Psoas muscle (tissue), 8 donors: ENCODE measurements at regions of chr10 and their contacts with region 1.

Region 1: DNA sequence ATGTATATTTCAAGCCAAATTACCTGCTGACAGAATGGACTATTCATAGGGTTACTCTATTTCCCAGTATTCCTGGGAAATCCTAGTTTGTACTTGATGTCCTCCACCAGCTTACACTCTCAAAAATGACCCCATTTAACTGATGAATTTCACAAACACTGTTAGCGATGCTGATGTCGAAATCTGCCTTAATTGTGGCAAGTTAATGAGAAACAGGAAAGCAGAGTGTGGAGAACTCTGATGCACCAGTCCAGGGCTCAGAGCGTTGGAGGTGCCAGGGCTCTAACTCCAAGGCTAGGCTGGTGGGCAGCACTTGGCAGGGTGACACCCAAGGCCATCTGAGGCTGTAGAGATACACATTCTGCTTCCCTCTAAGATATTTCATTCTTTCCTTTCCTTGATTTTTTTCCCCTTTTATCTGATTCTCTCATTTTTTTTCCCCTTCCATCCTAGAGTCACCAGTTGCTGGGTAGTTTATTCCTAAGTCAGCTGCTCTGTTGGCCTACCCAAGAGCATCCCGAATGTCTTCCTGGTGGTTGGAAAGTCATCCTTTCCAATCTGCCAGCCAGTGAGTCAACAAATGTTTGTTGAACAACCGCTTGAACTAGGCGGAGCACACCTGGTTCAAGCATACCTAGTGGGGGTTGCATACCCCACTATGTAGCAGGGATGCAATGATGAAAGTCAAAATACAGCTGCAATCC is 525.0 kb upstream of the NRP1 start:
- DNase-seq: no peak
- ATAC-seq: no peak
- H3K4me3 ChIP-seq: no peak overlapping the region
- H3K27ac ChIP-seq: no peak overlapping the region
- H3K4me1 ChIP-seq: no peaks in the 10 kb centered on the region
- H3K27me3 ChIP-seq: no peaks in the 10 kb centered on the region
- CTCF ChIP-seq: no peak

Region 2: DNA sequence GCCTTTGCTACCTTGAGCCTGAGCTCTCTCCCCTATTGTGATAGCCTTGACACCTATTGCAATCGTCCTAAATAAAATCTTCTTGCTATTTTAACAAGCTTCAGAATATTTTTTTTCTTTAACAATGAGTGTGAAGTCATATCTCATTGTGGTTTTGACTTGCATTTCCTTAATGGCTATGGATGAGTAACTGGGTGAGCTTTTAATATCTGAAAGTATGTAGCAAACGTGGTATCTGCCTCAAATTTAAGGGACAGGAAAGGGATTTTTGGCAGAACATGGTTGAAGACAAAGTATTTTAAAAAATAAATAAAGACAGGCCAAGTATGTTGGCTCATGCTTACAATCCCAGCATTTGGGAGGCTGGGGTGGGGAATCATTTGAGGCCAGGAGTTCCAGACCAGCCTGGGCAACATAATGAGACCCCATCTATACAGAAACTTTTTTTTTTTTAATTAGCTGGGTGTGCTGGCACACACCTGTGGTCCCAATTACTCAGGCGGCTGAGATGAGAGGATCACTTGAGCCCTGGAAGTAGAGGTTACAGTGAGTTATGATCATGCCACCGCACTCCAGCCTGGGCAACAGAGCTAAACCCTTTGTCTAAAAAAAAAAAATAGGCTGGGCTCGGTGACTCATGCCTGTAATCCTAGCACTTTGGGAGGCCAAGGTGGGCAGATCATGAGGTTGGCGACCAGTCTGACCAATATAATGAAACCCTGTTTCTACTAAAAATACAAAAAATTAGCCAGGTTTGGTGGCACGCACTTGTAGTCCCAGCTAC is 205.7 kb before region 1 on chr10:
- intact Hi-C with region 1: loop called in 1 of 2 experiments (anchors 5 kb)
- DNase-seq: no peak
- ATAC-seq: no peak
- H3K4me3 ChIP-seq: no peak overlapping the region
- H3K27ac ChIP-seq: no peak overlapping the region
- H3K4me1 ChIP-seq: no peaks in the 10 kb centered on the region
- H3K27me3 ChIP-seq: no peaks in the 10 kb centered on the region
- CTCF ChIP-seq: no peak

Region 3: GRCh38 chr10:33760056-33760943 is 99.2 kb before region 1 on chr10:
- intact Hi-C with region 1: no loop called
- DNase-seq: no peak
- ATAC-seq: no peak
- H3K4me3 ChIP-seq: no peak overlapping the region
- H3K27ac ChIP-seq: no peak overlapping the region
- H3K4me1 ChIP-seq: no peaks in the 10 kb centered on the region
- H3K27me3 ChIP-seq: no peaks in the 10 kb centered on the region
- CTCF ChIP-seq: no peak

Region 4: GRCh38 chr10:33808475-33808874 is 51.0 kb before region 1 on chr10:
- intact Hi-C with region 1: no loop called
- DNase-seq: peak in 1 of 2 donors; percentile 57
- ATAC-seq: peak; percentile 84 to 90 (median 87)
- H3K4me3 ChIP-seq: no peak overlapping the region
- H3K27ac ChIP-seq: peak overlapping the region; percentile 85
- H3K4me1 ChIP-seq: peaks cover 41% of the 10 kb centered on the region
- H3K27me3 ChIP-seq: no peaks in the 10 kb centered on the region
- CTCF ChIP-seq: no peak

Region 5: DNA sequence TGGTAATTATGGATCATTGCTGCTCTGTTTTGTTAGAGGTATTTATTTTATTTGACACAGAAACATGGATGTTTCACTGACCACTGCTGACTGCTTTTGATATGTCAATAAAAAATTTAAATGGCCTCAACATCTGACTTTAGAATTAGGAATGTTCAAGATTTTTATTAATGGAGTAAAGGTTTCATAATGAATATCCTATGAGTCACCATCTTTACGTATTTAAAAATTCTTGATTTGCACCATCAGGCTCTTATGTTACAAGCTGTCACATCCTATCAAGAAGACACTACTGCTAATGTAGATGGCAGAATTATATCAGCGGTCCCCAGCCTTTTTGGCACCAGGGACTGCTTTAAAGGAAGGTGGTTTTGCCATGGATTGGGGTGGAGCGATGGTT is 53.7 kb after region 1 on chr10:
- intact Hi-C with region 1: no loop called
- DNase-seq: no peak
- ATAC-seq: no peak
- H3K4me3 ChIP-seq: no peak overlapping the region
- H3K27ac ChIP-seq: no peak overlapping the region
- H3K4me1 ChIP-seq: no peaks in the 10 kb centered on the region
- H3K27me3 ChIP-seq: no peaks in the 10 kb centered on the region
- CTCF ChIP-seq: no peak